ENCODE measurements at regions of chr12 and their contacts with region 1.

Region 1: GRCh38 chr12:28190321-28191050 is at the start of gene CCDC91:
- DNase-seq: peak; percentile 83 to 95 (median 90)
- ATAC-seq: peak; percentile 90
- H3K4me3 ChIP-seq: peak within 1 kb of the TSS; percentile 80
- H3K4me3 Mint-ChIP-seq: peak within 1 kb of the TSS; percentile 88 to 98 (median 96)
- H3K27ac ChIP-seq: peak within 1 kb of the TSS; percentile 98
- H3K27ac Mint-ChIP-seq: peak within 1 kb of the TSS; percentile 98 to 100 (median 99)
- H3K4me1 ChIP-seq: peaks cover 19 to 25% of the 10 kb centered on the region in 2 donors
- H3K4me1 Mint-ChIP-seq: peaks cover 27 to 79% (median 68%) of the 10 kb centered on the region in 7 donors
- H3K27me3 ChIP-seq: no peaks in the 10 kb centered on the region
- H3K27me3 Mint-ChIP-seq: no peaks in the 10 kb centered on the region
- total RNA-seq, gene CCDC91: 20.2 to 105 (median 70.4) TPM

Region 2: DNA sequence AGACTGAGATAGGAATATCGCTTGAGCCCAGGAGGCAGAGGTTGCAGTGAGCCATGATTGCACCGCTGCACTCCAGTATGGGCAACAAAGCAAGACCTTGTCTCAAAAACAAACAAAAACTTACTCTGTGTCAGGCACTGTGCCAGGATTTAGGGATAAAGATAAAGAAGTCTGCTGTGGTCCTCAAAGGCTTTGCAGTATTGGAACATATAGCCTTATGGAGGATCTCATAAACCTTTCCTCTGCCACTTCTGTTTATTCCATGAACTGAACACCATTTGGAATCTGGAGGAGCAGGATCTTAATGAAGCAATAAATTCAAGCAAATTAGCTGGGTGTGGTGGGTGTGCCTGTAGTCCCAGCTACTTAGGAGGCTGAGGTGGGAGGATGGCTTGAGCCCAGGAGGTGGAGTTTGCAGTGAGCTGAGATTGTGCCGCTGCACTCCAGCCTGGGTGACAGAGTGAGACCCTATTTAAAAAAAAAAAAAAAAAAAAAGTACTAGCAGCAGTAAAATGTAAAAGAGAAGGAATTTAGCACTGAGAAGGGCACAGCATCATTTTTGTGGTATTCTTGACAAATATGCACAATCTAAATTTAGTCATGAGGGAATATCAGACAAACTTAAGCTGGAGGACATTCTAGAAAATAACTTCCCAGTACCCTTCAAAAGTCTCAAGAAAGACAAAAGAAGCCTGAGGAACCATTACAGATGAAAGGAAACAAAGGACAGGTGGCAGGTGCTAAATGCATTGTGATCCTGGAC is 830.7 kb before region 1 on chr12:
- CTCF ChIA-PET with region 1: no interaction called
- POLR2A ChIA-PET with region 1: no interaction called
- intact Hi-C with region 1: no loop called
- DNase-seq: no peak
- ATAC-seq: no peak
- H3K4me3 ChIP-seq: no peak overlapping the region
- H3K4me3 Mint-ChIP-seq: no peak overlapping the region
- H3K27ac ChIP-seq: no peak overlapping the region
- H3K27ac Mint-ChIP-seq: no peak overlapping the region
- H3K4me1 ChIP-seq: no peaks in the 10 kb centered on the region
- H3K4me1 Mint-ChIP-seq: no peaks in the 10 kb centered on the region
- H3K27me3 ChIP-seq: no peaks in the 10 kb centered on the region
- H3K27me3 Mint-ChIP-seq: peaks cover 13 to 27% (median 17%) of the 10 kb centered on the region in 5 donors

Region 3: DNA sequence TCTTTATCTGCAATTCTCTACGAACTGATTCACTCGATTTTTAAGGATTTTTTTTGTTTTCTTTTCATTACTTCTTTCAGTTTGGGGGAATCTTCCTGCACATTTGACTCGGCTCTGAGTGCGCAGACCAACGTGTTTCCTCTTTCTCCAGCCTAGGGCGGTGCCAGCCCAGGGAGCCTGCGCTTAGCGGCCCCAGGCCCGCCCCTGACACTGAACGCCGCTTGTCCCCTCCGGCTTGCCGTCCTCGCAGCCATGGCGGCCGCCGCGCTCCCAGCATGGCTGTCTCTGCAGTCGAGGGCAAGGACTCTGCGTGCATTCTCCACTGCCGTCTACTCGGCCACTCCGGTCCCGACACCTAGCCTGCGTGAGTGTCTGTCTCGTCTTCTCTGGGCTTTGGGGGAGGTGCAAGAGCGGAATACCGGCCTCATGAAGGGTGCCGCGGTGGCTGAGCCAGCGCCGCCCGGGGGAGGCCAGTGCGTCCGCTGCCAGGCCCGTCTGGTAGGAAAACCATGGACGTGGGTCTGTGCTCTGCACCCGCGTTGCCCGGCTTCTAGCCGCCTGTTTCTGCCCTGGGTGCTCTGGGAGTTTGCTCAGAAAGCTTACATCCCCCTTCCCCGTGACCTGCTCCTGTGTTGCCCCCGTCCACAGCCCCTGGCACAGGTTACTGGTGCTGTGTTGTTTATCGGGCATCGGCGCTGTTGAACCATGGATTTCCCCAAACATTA is 479.7 kb before region 1 on chr12 and contains the start of gene MRPS35:
- CTCF ChIA-PET with region 1: no interaction called
- POLR2A ChIA-PET with region 1: no interaction called
- intact Hi-C with region 1: loop called (anchors 1 kb)
- DNase-seq: peak; percentile 86 to 94 (median 92)
- ATAC-seq: peak; percentile 100
- H3K4me3 ChIP-seq: peak within 1 kb of the TSS; percentile 98
- H3K4me3 Mint-ChIP-seq: peak within 1 kb of the TSS; percentile 94 to 100 (median 98)
- H3K27ac ChIP-seq: peak within 1 kb of the TSS; percentile 85
- H3K27ac Mint-ChIP-seq: peak within 1 kb of the TSS; percentile 91 to 100 (median 98)
- H3K4me1 ChIP-seq: peaks cover 7 to 13% of the 10 kb centered on the region in 2 donors
- H3K4me1 Mint-ChIP-seq: peaks cover 21 to 46% (median 39%) of the 10 kb centered on the region in 7 donors
- H3K27me3 ChIP-seq: no peaks in the 10 kb centered on the region
- H3K27me3 Mint-ChIP-seq: peaks cover 0 to 18% (median 0%) of the 10 kb centered on the region in 5 donors
- total RNA-seq, gene MRPS35: 19.9 to 35.7 (median 23.5) TPM

Region 4: GRCh38 chr12:27821259-27821973 is 369.1 kb before region 1 on chr12:
- CTCF ChIA-PET with region 1: no interaction called
- POLR2A ChIA-PET with region 1: no interaction called
- intact Hi-C with region 1: loop called in 1 of 2 experiments (anchors 5 kb)
- DNase-seq: peak in 7 of 9 donors; percentile 21 to 52 (median 42)
- ATAC-seq: peak; percentile 56
- H3K4me3 ChIP-seq: no peak overlapping the region
- H3K4me3 Mint-ChIP-seq: peak overlapping the region in 7 of 10 donors; percentile 31 to 70 (median 54)
- H3K27ac ChIP-seq: no peak overlapping the region
- H3K27ac Mint-ChIP-seq: peak overlapping the region in 5 of 9 donors; percentile 8 to 88 (median 57)
- H3K4me1 ChIP-seq: peaks cover 0 to 8% of the 10 kb centered on the region in 2 donors
- H3K4me1 Mint-ChIP-seq: peaks cover 0 to 34% (median 13%) of the 10 kb centered on the region in 7 donors
- H3K27me3 ChIP-seq: no peaks in the 10 kb centered on the region
- H3K27me3 Mint-ChIP-seq: peaks cover 0 to 52% (median 4%) of the 10 kb centered on the region in 5 donors

Region 5: GRCh38 chr12:28253161-28253641 is 62.7 kb after region 1 on chr12:
- CTCF ChIA-PET with region 1: interaction called, 4 read pairs
- POLR2A ChIA-PET with region 1: no interaction called
- intact Hi-C with region 1: loop called (anchors 1 to 2 kb)
- DNase-seq: peak in 8 of 9 donors; percentile 4 to 45 (median 21)
- ATAC-seq: peak; percentile 78
- H3K4me3 ChIP-seq: peak overlapping the region; percentile 18
- H3K4me3 Mint-ChIP-seq: peak overlapping the region; percentile 55 to 83 (median 80)
- H3K27ac ChIP-seq: no peak overlapping the region
- H3K27ac Mint-ChIP-seq: peak overlapping the region; percentile 66 to 89 (median 79)
- H3K4me1 ChIP-seq: peaks cover 16 to 29% of the 10 kb centered on the region in 2 donors
- H3K4me1 Mint-ChIP-seq: peaks cover 35 to 64% (median 58%) of the 10 kb centered on the region in 7 donors
- H3K27me3 ChIP-seq: no peaks in the 10 kb centered on the region
- H3K27me3 Mint-ChIP-seq: no peaks in the 10 kb centered on the region

Region 6: DNA sequence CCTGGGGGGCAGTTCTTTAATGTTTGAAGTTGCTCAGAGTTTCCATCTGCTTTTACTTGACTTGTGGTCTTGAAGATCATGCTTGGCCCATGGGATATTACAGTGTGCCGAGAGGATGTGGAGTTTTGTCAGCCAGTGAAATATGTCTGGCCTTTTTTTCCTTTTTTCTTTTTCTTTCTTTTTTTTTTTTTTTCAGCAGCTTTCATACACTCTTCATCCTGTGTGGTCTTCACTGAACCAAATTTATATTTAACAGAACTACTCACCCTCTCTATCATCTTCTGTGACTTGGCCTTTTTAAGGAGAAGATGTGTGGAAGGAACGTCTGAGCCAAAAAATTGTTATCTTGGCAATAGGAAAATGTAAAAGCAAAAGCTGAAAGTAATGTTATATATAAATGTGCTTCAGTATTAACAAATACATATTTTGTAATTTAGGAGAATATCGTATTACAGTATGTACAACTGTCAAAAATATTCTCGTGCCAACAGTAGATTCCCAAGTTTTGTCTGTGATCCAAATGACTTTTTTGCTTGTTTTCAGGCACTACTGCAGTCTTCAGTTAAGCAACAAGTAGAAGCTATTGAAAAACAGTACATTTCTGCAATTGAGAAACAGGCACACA is 200.4 kb after region 1 on chr12:
- CTCF ChIA-PET with region 1: no interaction called
- POLR2A ChIA-PET with region 1: no interaction called
- intact Hi-C with region 1: no loop called
- DNase-seq: no peak
- ATAC-seq: no peak
- H3K4me3 ChIP-seq: no peak overlapping the region
- H3K4me3 Mint-ChIP-seq: no peak overlapping the region
- H3K27ac ChIP-seq: no peak overlapping the region
- H3K27ac Mint-ChIP-seq: no peak overlapping the region
- H3K4me1 ChIP-seq: no peaks in the 10 kb centered on the region
- H3K4me1 Mint-ChIP-seq: peaks cover 0 to 7% (median 0%) of the 10 kb centered on the region in 7 donors
- H3K27me3 ChIP-seq: no peaks in the 10 kb centered on the region
- H3K27me3 Mint-ChIP-seq: no peaks in the 10 kb centered on the region

Region 7: DNA sequence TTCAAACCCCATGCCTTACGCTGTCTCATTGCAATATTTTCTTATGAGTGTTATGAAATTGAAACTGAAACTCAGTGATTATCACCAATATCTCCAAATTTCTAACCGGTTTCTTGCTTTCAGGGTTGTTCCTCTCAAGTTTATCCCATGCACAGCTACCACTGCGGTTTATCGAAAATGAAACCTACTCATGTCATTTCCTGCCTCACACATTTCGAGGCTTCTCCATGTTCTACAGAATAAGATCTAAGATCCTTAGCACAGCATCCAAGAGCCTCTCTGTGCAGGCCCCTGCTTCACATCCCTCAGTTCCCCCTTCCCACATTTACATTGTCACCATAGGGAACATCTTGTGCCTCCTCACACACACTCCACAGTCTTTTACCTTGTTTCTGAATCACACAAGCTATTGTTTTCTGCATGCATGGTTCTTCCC is 913.1 kb after region 1 on chr12:
- CTCF ChIA-PET with region 1: no interaction called
- POLR2A ChIA-PET with region 1: no interaction called
- intact Hi-C with region 1: loop called (anchors 2 to 5 kb)
- DNase-seq: peak in 8 of 9 donors; percentile 41 to 82 (median 76)
- ATAC-seq: peak; percentile 95
- H3K4me3 ChIP-seq: peak overlapping the region; percentile 21
- H3K4me3 Mint-ChIP-seq: peak overlapping the region; percentile 71 to 91 (median 78)
- H3K27ac ChIP-seq: peak overlapping the region; percentile 74
- H3K27ac Mint-ChIP-seq: peak overlapping the region; percentile 91 to 99 (median 97)
- H3K4me1 ChIP-seq: peaks cover 23 to 33% of the 10 kb centered on the region in 2 donors
- H3K4me1 Mint-ChIP-seq: peaks cover 30 to 54% (median 46%) of the 10 kb centered on the region in 7 donors
- H3K27me3 ChIP-seq: no peaks in the 10 kb centered on the region
- H3K27me3 Mint-ChIP-seq: peaks cover 0 to 23% (median 0%) of the 10 kb centered on the region in 5 donors

Measured in naive thymus-derived CD4-positive, alpha-beta T cell (primary cell).